Activated CD4-positive, alpha-beta T cell treated with anti-CD3 and anti-CD28 coated beads, Interleukin-2, amount 10 ng/mL, durations not matched to agents 24 days and 14 days (primary cell): ENCODE measurements at regions of chr13 and their contacts with region 1.

Region 1: GRCh38 chr13:21176220-21176982 is at the starts of genes MRPL57 and SKA3:
- DNase-seq: peak; percentile 99
- H3K4me3 Mint-ChIP-seq: peak within 1 kb of the TSS; percentile 99
- H3K27ac Mint-ChIP-seq: peak within 1 kb of the TSS; percentile 98
- H3K4me1 Mint-ChIP-seq: peaks cover 23% of the 10 kb centered on the region
- H3K27me3 Mint-ChIP-seq: no peaks in the 10 kb centered on the region
- total RNA-seq, gene MRPL57: 32.7 and 33.0 TPM in 2 replicates
- total RNA-seq, gene SKA3: 35.6 and 39.6 TPM in 2 replicates

Region 2: GRCh38 chr13:20902438-20903163 is 273.8 kb before region 1 on chr13 and contains the start of gene XPO4:
- intact Hi-C with region 1: loop called (anchors 2 kb)
- DNase-seq: peak; percentile 95
- H3K4me3 Mint-ChIP-seq: peak within 1 kb of the TSS; percentile 99
- H3K27ac Mint-ChIP-seq: peak within 1 kb of the TSS; percentile 97
- H3K4me1 Mint-ChIP-seq: peaks cover 26% of the 10 kb centered on the region
- H3K27me3 Mint-ChIP-seq: peaks cover 2% of the 10 kb centered on the region
- total RNA-seq, gene XPO4: 32.5 and 34.8 TPM in 2 replicates

Region 3: DNA sequence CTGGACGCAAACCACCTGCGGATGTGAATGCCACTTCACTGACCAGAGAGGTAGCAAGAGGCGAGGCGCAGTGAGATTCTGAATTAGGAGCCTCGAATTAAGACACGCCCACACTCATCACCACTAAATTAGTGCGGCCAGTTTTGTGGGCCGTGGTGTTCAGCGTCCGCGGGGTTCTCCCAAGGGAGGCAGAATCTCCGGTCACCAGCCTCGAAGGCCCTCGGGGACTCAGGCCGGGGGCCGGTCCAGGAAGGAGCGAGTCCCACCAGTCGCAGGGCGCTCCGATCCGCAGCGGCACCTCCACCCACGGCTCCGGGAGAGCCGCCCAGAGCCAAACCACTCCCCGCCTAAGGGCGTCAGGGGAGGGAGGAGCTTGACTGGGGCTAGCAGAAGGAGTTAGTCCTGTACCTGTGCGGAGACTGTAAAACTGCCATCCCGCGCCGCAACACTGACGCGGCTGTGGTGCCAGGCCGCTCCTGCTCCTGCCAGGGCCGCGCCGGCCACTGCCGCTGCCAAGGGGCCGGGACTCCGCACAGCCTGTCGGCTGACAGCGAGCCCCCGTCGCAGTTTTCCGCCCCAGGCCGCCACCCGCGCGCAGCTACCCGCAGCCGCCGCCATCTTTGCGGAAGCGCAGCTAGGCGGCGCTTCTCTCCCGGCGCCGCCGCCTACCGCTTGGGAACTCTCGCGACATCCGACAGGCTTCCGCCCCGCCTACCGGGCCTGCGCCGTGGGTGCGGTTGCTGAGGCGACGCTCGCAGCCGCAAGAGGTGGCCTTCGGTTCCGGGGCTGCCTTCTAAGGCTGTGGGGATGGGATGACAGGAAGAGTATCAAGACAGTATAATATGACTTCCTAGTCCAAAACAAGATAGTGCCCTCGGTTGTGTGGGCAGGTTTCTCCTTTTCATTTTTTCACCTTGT is 427.4 kb after region 1 on chr13 and contains the start of gene MICU2:
- intact Hi-C with region 1: loop called (anchors 10 kb)
- DNase-seq: peak; percentile 99
- H3K4me3 Mint-ChIP-seq: peak within 1 kb of the TSS; percentile 89
- H3K27ac Mint-ChIP-seq: peak within 1 kb of the TSS; percentile 89
- H3K4me1 Mint-ChIP-seq: peaks cover 25% of the 10 kb centered on the region
- H3K27me3 Mint-ChIP-seq: peaks cover 22% of the 10 kb centered on the region
- total RNA-seq, gene MICU2: 34.2 and 35.0 TPM in 2 replicates